Activated CD8-positive, alpha-beta T cell treated with anti-CD3 and anti-CD28 coated beads, Interleukin-2, amount 10 ng/mL, durations not matched to agents 7 days and 5 days (primary cell): ENCODE measurements at regions of chr11 and their contacts with region 1.

Region 1: GRCh38 chr11:75142714-75143419 is 8.0 kb upstream of the SLCO2B1 start:
- DNase-seq: peak; percentile 86
- ATAC-seq: peak; percentile 86
- H3K4me3 Mint-ChIP-seq: peak overlapping the region; percentile 42
- H3K27ac Mint-ChIP-seq: peak overlapping the region; percentile 89
- H3K4me1 Mint-ChIP-seq: peaks cover 58% of the 10 kb centered on the region
- H3K27me3 Mint-ChIP-seq: peaks cover 22% of the 10 kb centered on the region

Region 2: DNA sequence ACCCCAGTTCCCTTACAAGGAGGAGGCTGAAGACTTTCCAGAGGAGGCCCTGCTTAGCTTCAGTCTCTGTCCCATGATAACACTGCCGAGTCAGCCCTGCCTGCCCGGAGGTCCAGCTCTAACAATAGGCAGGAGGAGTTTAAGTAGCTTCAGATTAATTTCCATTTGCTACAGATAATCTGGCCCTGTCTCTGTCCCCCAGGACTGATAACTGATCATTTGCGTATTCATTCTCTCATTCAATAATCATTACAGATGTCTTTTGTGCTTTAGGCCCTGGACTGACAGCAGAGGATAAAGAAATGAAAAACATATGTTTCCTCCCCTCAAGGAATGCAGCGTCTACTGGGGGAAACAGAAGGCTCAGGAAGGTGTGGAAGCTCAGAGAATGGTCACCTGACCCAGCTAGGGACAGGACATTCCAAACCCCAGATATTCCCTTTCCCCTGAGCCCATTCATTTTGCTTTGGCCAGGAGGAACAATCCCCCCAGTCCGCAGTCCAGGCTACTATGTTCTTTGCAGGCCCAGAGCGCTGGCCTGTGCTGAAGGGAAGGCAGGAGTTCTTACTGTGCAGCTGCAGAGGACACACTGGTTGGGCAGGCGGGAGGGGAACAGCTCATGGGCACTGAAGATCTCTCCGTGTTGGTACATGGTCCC is 432.5 kb before region 1 on chr11:
- CTCF ChIA-PET with region 1: no interaction called
- POLR2A ChIA-PET with region 1: no interaction called
- DNase-seq: no peak
- ATAC-seq: no peak
- H3K4me3 Mint-ChIP-seq: no peak overlapping the region
- H3K27ac Mint-ChIP-seq: no peak overlapping the region
- H3K4me1 Mint-ChIP-seq: no peaks in the 10 kb centered on the region
- H3K27me3 Mint-ChIP-seq: no peaks in the 10 kb centered on the region

Region 3: GRCh38 chr11:75022759-75023396 is 120.0 kb before region 1 on chr11:
- CTCF ChIA-PET with region 1: interaction called, 17 read pairs
- POLR2A ChIA-PET with region 1: no interaction called
- DNase-seq: peak; percentile 81
- ATAC-seq: peak; percentile 90
- H3K4me3 Mint-ChIP-seq: no peak overlapping the region
- H3K27ac Mint-ChIP-seq: no peak overlapping the region
- H3K4me1 Mint-ChIP-seq: no peaks in the 10 kb centered on the region
- H3K27me3 Mint-ChIP-seq: no peaks in the 10 kb centered on the region

Region 4: DNA sequence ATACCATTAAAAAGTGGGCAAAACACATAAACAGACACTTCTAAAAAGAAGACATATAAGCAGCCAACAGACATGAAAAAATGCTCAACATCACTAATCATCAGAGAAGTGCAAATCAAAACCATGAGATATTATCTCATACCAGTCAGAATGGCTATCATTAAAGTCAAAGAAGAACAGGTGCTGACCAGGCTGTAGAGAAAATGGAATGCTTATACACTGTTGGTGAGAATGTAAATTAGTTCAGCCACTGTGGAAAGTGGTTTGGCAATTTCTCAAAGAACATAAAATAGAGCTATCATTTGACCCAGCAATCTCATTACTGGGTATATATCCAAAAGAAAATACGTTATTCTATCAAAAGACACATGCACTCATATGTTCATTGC is 59.7 kb before region 1 on chr11:
- CTCF ChIA-PET with region 1: interaction called, 10 read pairs
- POLR2A ChIA-PET with region 1: no interaction called
- DNase-seq: no peak
- ATAC-seq: no peak
- H3K4me3 Mint-ChIP-seq: no peak overlapping the region
- H3K27ac Mint-ChIP-seq: no peak overlapping the region
- H3K4me1 Mint-ChIP-seq: no peaks in the 10 kb centered on the region
- H3K27me3 Mint-ChIP-seq: peaks cover 35% of the 10 kb centered on the region

Region 5: DNA sequence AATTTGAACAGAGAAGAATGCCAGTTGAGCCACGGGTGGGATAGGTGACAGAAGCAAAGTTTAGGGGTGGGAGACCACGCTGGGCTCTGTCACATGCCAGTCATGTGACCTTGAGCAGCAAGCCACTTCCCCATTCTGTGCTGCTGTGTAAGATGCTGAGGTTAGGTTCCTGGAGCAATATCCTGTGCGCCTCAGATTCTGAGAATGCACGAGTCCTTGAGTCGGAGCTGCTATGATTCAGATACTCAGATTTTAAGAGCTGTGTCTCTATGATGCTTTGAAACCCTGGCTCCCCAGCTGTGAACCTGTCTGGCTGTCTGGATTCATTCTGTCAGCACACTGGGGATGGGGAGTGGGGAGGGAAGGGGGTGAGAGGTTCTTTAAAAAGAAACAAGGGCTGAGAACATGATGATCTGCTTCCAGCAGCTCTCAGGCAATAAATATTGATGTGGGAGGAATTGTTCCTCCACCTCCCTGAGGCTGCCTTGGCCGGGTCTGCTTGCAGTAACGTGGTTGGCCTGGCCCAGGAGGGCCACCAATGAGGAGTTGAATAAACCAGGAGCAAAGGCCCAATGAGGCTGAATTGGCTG is 32.0 kb after region 1 on chr11:
- CTCF ChIA-PET with region 1: interaction called, 12 read pairs
- POLR2A ChIA-PET with region 1: interaction called, 3 read pairs
- DNase-seq: peak; percentile 70
- ATAC-seq: peak; percentile 90
- H3K4me3 Mint-ChIP-seq: peak overlapping the region; percentile 30
- H3K27ac Mint-ChIP-seq: peak overlapping the region; percentile 90
- H3K4me1 Mint-ChIP-seq: peaks cover 27% of the 10 kb centered on the region
- H3K27me3 Mint-ChIP-seq: peaks cover 11% of the 10 kb centered on the region

Region 6: GRCh38 chr11:75214411-75214821 is 71.5 kb after region 1 on chr11:
- CTCF ChIA-PET with region 1: interaction called, 432 read pairs
- POLR2A ChIA-PET with region 1: no interaction called
- DNase-seq: peak; percentile 93
- ATAC-seq: peak; percentile 87
- H3K4me3 Mint-ChIP-seq: no peak overlapping the region
- H3K27ac Mint-ChIP-seq: no peak overlapping the region
- H3K4me1 Mint-ChIP-seq: no peaks in the 10 kb centered on the region
- H3K27me3 Mint-ChIP-seq: peaks cover 27% of the 10 kb centered on the region

Region 7: DNA sequence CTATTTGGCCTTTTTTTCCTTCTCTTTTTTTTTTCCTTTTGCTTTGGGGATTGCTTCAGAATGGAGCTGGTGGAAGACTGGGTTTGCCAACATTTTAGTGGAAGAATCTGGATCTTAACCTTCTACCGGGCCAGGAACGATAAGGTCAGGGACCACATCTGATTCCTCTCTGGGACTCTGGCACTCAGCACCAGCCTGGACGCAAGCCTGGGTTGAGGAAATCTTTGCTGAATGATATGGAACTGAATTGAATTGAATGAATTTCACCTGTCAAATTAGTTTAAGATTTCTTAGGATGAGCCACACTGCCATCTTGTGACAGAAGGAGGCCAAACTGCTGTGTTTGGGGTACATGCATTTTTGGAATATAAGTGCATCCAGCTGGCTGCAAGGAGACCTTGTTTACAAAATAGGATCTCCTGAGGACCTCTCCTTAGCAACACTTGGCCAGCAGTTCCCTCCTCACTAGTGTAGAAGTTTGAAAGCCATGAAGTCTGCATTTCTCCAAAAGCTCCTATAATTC is 128.1 kb after region 1 on chr11:
- CTCF ChIA-PET with region 1: interaction called, 37 read pairs
- POLR2A ChIA-PET with region 1: no interaction called
- DNase-seq: peak; percentile 37
- ATAC-seq: no peak
- H3K4me3 Mint-ChIP-seq: no peak overlapping the region
- H3K27ac Mint-ChIP-seq: peak overlapping the region; percentile 72
- H3K4me1 Mint-ChIP-seq: peaks cover 25% of the 10 kb centered on the region
- H3K27me3 Mint-ChIP-seq: no peaks in the 10 kb centered on the region